CD8-positive, alpha-beta T cell (primary cell): ENCODE measurements at regions of chr18 and their contacts with region 1.

Region 1: GRCh38 chr18:22342625-22343024 is 75.1 kb downstream of the CTAGE1 start:
- DNase-seq: peak in 5 of 9 experiments; percentile 40 to 85 (median 67)
- ATAC-seq: peak; percentile 45
- H3K4me3 ChIP-seq: no peak overlapping the region
- H3K4me3 Mint-ChIP-seq: peak overlapping the region; percentile 53
- H3K27ac ChIP-seq: peak overlapping the region; percentile 75 to 88
- H3K27ac Mint-ChIP-seq: peak overlapping the region; percentile 98
- H3K4me1 ChIP-seq: peaks cover 74% of the 10 kb centered on the region
- H3K4me1 Mint-ChIP-seq: peaks cover 84% of the 10 kb centered on the region
- H3K27me3 ChIP-seq: no peaks in the 10 kb centered on the region
- H3K27me3 Mint-ChIP-seq: no peaks in the 10 kb centered on the region
- CTCF ChIP-seq: no peak

Region 2: GRCh38 chr18:22169007-22169864 is 173.4 kb before region 1 on chr18 and contains the start of gene GATA6:
- CTCF ChIA-PET with region 1: no interaction called
- POLR2A ChIA-PET with region 1: interaction called, 7 read pairs
- intact Hi-C with region 1: loop called in 1 of 2 experiments (anchors 5 kb)
- DNase-seq: peak in 7 of 9 experiments; percentile 15 to 82 (median 63)
- ATAC-seq: peak; percentile 72
- H3K4me3 ChIP-seq: peak within 1 kb of the TSS; percentile 54 to 68
- H3K4me3 Mint-ChIP-seq: peak within 1 kb of the TSS; percentile 90
- H3K27ac ChIP-seq: no peak within 1 kb of the TSS
- H3K27ac Mint-ChIP-seq: no peak within 1 kb of the TSS
- H3K4me1 ChIP-seq: peaks cover 34% of the 10 kb centered on the region
- H3K4me1 Mint-ChIP-seq: peaks cover 29% of the 10 kb centered on the region
- H3K27me3 ChIP-seq: peaks cover 44 to 59% of the 10 kb centered on the region in 2 experiments
- H3K27me3 Mint-ChIP-seq: peaks cover 62% of the 10 kb centered on the region
- CTCF ChIP-seq: peak; percentile 13
- total RNA-seq, gene GATA6: 4.0 to 4.3 TPM

Region 3: DNA sequence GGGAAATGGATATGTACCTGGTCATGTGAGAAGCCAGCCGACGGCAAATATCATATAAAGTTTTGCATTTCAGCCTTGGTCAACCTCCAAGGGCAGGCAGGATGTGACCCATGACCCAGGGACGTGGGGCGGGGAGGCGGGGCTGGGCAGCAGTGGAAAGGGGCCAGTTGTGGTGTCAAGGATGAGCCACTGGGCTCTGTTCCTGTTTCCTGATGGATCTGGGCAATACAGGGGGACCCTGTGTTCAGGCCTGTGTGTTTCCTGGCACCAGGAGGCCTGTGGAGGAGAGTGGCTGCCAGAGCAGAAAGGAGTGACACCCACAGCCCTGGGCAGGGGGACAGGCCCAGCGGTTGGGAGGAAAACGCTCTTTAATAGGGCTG is 66.3 kb before region 1 on chr18:
- CTCF ChIA-PET with region 1: no interaction called
- POLR2A ChIA-PET with region 1: no interaction called
- intact Hi-C with region 1: no loop called
- DNase-seq: no peak
- ATAC-seq: no peak
- H3K4me3 ChIP-seq: no peak overlapping the region
- H3K4me3 Mint-ChIP-seq: no peak overlapping the region
- H3K27ac ChIP-seq: no peak overlapping the region
- H3K27ac Mint-ChIP-seq: no peak overlapping the region
- H3K4me1 ChIP-seq: no peaks in the 10 kb centered on the region
- H3K4me1 Mint-ChIP-seq: no peaks in the 10 kb centered on the region
- H3K27me3 ChIP-seq: no peaks in the 10 kb centered on the region
- H3K27me3 Mint-ChIP-seq: peaks cover 7% of the 10 kb centered on the region
- CTCF ChIP-seq: no peak

Region 4: DNA sequence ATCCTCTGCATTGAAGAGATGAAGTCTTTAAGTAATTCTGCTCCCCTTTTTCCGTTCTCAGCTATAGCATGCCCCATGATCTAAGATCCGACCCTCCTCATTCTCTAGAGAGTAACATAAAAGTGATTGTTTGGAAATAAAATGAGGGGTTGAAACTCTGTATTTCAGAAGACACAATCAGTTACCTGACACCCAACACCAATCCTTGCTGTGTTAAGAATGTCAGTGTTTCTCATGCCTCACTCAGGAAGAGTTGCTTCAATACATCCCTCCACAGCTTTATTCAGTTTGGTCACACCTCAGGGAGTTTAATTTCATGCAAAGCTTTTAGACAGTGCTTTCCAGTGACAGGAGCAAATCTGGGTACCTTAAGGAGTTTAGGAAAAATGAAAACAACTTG is 540.6 kb after region 1 on chr18:
- CTCF ChIA-PET with region 1: no interaction called
- POLR2A ChIA-PET with region 1: no interaction called
- intact Hi-C with region 1: no loop called
- DNase-seq: no peak
- ATAC-seq: no peak
- H3K4me3 ChIP-seq: no peak overlapping the region
- H3K4me3 Mint-ChIP-seq: no peak overlapping the region
- H3K27ac ChIP-seq: no peak overlapping the region
- H3K27ac Mint-ChIP-seq: no peak overlapping the region
- H3K4me1 ChIP-seq: no peaks in the 10 kb centered on the region
- H3K4me1 Mint-ChIP-seq: no peaks in the 10 kb centered on the region
- H3K27me3 ChIP-seq: no peaks in the 10 kb centered on the region
- H3K27me3 Mint-ChIP-seq: peaks cover 7% of the 10 kb centered on the region
- CTCF ChIP-seq: no peak